A549 (cell line): ENCODE measurements at regions of chr13 and their contacts with region 1.

Region 1: DNA sequence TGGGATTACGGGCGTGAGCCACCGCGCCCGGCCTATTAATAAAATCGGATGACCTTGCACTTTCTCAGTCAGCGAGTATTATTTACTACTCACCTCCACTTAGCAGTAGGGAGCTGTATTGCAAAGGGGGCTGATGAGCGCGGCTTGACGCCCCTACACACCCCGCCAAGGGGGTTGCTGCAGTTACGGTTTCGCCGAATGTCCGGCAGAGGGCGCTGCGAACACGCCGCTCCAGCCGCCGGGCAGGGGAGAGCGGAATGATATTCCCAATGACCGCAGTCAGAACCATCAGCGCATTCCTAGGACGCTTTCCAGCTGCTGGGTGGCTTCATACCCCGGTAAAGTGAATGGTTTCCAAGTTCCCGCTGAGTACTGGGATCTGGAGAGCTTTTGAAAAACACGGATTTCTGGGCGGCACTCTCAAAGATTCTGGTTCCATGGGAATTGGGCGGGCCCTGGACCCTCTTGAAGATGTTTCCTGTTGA is 30.0 kb upstream of the TPT1 start:
- DNase-seq: peak; percentile 41 to 48
- ATAC-seq: peak; percentile 76 to 94; a peak in 5 of 6 replicates
- H3K4me3 ChIP-seq: no peak overlapping the region
- H3K27ac ChIP-seq: peak overlapping the region in 1 of 2 experiments; percentile 34; a peak in 1 of 6 replicates
- H3K4me1 ChIP-seq: peaks cover 12% of the 10 kb centered on the region
- CTCF ChIP-seq: peak; percentile 76
- EP300 ChIP-seq: no peak
- POLR2A ChIP-seq: no peak
- RAD21 ChIP-seq: peak; percentile 73 to 78

Region 2: GRCh38 chr13:44978328-44978727 is 392.6 kb before region 1 on chr13:
- CTCF ChIA-PET with region 1: no interaction called
- POLR2A ChIA-PET with region 1: no interaction called
- DNase-seq: peak in 1 of 2 experiments; percentile 8
- ATAC-seq: peak; percentile 62 to 63; a peak in 4 of 6 replicates
- H3K4me3 ChIP-seq: no peak overlapping the region
- H3K27ac ChIP-seq: no peak overlapping the region
- H3K4me1 ChIP-seq: peaks cover under 1% of the 10 kb centered on the region; the same call in 1 of the 3 replicates
- CTCF ChIP-seq: no peak
- EP300 ChIP-seq: no peak
- POLR2A ChIP-seq: no peak
- RAD21 ChIP-seq: no peak

Region 3: DNA sequence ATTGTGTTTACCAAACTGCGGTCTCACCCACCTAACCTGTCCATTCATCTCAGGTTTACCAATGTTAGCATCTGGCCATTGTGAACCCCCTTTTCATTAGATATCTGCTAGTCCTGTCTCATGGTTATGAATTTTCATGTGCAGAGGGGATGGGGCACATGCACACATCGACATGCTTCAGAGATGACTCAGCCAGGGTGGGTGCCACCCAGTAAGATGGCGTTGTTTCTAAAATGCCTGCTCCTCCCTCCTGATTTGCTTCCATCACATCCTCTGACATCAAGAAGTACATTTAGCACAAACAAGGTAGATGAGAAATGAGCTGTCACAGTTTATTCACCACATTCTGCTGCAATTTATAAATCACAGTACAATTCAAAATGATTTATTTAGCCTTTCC is 330.3 kb before region 1 on chr13:
- CTCF ChIA-PET with region 1: no interaction called
- POLR2A ChIA-PET with region 1: no interaction called
- DNase-seq: no peak
- ATAC-seq: no peak
- H3K4me3 ChIP-seq: no peak overlapping the region
- H3K27ac ChIP-seq: no peak overlapping the region
- H3K4me1 ChIP-seq: no peaks in the 10 kb centered on the region
- CTCF ChIP-seq: no peak
- EP300 ChIP-seq: no peak
- POLR2A ChIP-seq: no peak
- RAD21 ChIP-seq: no peak

Region 4: DNA sequence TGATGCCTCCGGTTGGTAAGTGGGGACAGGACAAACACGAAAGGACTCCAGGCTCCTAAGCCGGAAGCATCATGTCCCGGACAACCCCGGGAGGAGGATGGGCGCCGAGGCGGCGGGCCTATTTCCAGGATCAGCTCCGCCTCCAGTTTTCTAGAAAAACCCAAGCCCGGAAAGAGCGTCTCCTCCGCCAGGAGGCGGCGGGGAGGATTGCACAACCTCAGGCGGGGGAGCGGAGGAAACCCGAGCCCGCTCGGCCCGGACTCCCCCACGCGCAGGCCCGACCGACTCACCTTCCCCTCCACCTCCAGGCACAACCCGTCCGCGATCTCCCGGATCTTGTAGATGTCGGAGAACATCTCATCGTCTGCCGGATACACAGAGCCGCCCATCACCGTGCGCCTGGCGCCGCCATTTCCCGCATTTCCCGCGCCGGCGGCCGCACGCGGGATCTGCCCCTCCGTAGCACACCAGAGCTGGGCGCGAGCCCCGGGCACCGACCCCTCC is 30.5 kb before region 1 on chr13:
- CTCF ChIA-PET with region 1: interaction called, 18 read pairs
- POLR2A ChIA-PET with region 1: interaction called, 9 read pairs
- DNase-seq: peak; percentile 47 to 84
- ATAC-seq: peak; percentile 67 to 73
- H3K4me3 ChIP-seq: peak overlapping the region; percentile 93
- H3K27ac ChIP-seq: peak overlapping the region; percentile 99 to 100
- H3K4me1 ChIP-seq: peaks cover 43% of the 10 kb centered on the region
- CTCF ChIP-seq: no peak
- EP300 ChIP-seq: no peak
- POLR2A ChIP-seq: peak; percentile 35; the same call in 1 of the 2 replicates
- RAD21 ChIP-seq: no peak

Region 5: GRCh38 chr13:45385907-45386553 is 15.1 kb after region 1 on chr13:
- CTCF ChIA-PET with region 1: interaction called, 42 read pairs
- POLR2A ChIA-PET with region 1: no interaction called
- DNase-seq: no peak
- ATAC-seq: no peak
- H3K4me3 ChIP-seq: no peak overlapping the region
- H3K27ac ChIP-seq: no peak overlapping the region
- H3K4me1 ChIP-seq: no peaks in the 10 kb centered on the region
- CTCF ChIP-seq: no peak
- EP300 ChIP-seq: no peak
- POLR2A ChIP-seq: no peak
- RAD21 ChIP-seq: no peak

Region 6: GRCh38 chr13:45402641-45403040 is 31.7 kb after region 1 on chr13:
- CTCF ChIA-PET with region 1: interaction called, 14 read pairs
- POLR2A ChIA-PET with region 1: no interaction called
- DNase-seq: no peak
- ATAC-seq: no peak
- H3K4me3 ChIP-seq: no peak overlapping the region
- H3K27ac ChIP-seq: no peak overlapping the region
- H3K4me1 ChIP-seq: 0 out of 3 replicates have a peak, but pooled peaks cover 5% of the 10 kb centered on the region
- CTCF ChIP-seq: no peak
- EP300 ChIP-seq: no peak
- POLR2A ChIP-seq: no peak
- RAD21 ChIP-seq: no peak

Region 7: GRCh38 chr13:45490068-45490467 is 119.1 kb after region 1 on chr13:
- CTCF ChIA-PET with region 1: interaction called, 10 read pairs
- POLR2A ChIA-PET with region 1: no interaction called
- DNase-seq: peak in 1 of 2 experiments; percentile 9
- ATAC-seq: peak; percentile 55 to 70; a peak in 4 of 6 replicates
- H3K4me3 ChIP-seq: no peak overlapping the region
- H3K27ac ChIP-seq: no peak overlapping the region
- H3K4me1 ChIP-seq: no peaks in the 10 kb centered on the region
- CTCF ChIP-seq: no peak
- EP300 ChIP-seq: no peak
- POLR2A ChIP-seq: no peak
- RAD21 ChIP-seq: peak in 1 of 2 experiments; percentile 28; a peak in 2 of 5 replicates

Region 8: GRCh38 chr13:45565331-45565730 is 194.4 kb after region 1 on chr13:
- CTCF ChIA-PET with region 1: no interaction called
- POLR2A ChIA-PET with region 1: no interaction called
- DNase-seq: no peak
- ATAC-seq: no peak
- H3K4me3 ChIP-seq: no peak overlapping the region
- H3K27ac ChIP-seq: no peak overlapping the region
- H3K4me1 ChIP-seq: no peaks in the 10 kb centered on the region
- CTCF ChIP-seq: no peak
- EP300 ChIP-seq: no peak
- POLR2A ChIP-seq: no peak
- RAD21 ChIP-seq: no peak